MCF 10A (cell line): ENCODE measurements at regions of chr17 and their contacts with region 1.

Region 1: DNA sequence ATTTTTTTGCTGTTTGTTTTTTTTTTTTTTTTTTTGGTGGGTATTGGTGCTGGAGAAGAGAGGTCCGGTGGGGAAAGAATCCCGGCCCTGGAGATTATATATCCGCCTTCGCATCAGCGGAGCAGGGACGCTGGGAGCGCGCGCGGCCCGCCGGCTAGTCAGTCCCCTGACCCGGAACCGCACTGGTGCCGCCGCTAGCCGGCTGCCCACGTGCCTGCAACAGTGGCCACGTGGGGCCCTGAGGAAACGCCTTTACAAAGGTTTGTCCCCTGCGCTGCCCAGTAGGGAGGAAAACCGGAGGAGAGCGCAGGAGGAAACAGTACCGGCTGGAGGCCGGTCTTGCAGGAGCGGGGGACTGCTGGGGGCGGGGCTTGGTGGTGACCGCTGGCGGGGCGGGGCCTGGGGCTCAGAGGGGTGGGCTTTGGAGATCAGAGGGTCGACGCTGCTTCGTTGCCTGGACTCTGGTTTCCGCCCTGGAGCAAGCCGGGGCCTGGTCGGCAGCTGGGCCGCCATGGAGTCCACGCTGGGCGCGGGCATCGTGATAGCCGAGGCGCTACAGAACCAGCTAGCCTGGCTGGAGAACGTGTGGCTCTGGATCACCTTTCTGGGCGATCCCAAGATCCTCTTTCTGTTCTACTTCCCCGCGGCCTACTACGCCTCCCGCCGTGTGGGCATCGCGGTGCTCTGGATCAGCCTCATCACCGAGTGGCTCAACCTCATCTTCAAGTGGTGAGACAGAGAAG is at the start of gene G6PC3:
- DNase-seq: peak; percentile 98
- H3K4me3 Mint-ChIP-seq: peak within 1 kb of the TSS; percentile 92
- H3K27ac Mint-ChIP-seq: peak within 1 kb of the TSS; percentile 97
- H3K4me1 Mint-ChIP-seq: peaks cover 26% of the 10 kb centered on the region
- H3K27me3 Mint-ChIP-seq: no peaks in the 10 kb centered on the region
- CTCF ChIP-seq: no peak
- total RNA-seq, gene G6PC3: 70.6 and 89.4 TPM in 2 replicates

Region 2: DNA sequence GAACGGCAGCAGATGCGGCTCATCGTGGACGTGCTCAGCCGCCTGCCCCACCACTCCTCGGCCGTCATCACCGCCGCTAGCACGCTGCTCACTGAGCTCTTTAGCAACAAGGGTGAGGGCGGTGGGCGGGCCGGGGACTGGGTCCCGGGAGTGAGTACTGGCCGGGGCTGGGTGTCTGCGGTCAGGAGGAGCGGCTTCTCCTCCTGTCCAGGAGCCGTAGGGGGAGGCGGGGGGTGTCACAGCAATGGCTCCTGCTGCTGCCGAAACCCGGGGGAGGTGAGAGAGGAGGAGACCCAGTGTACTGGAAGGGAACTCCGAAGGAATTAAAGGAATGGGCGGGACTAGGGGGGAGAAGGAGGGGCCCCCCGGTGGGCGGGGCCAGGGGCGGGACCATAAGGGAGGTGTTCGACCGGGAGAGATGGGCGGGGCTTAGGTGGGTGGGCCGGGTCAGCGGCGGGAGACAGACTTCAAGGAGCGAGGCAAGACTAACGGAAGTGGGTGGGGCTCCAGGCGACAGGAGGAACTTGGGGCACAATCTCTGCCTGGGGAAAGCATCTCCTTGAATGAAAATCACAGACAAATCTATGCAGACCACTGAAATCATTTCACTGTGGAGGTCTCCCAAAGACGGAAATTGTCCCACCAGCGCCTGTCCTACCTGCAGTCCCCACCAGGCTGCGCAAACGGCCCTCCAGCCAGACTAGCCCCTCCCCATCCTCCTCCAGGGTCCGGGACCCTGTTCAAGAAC is 63.9 kb before region 1 on chr17:
- CTCF ChIA-PET with region 1: interaction called, 3 read pairs
- POLR2A ChIA-PET with region 1: interaction called, 5 read pairs
- intact Hi-C with region 1: loop called (anchors 2 kb)
- DNase-seq: peak; percentile 99
- H3K4me3 Mint-ChIP-seq: peak overlapping the region; percentile 85
- H3K27ac Mint-ChIP-seq: peak overlapping the region; percentile 91
- H3K4me1 Mint-ChIP-seq: peaks cover 11% of the 10 kb centered on the region
- H3K27me3 Mint-ChIP-seq: no peaks in the 10 kb centered on the region
- CTCF ChIP-seq: peak; percentile 67

Region 3: GRCh38 chr17:44014437-44015172 is 56.0 kb before region 1 on chr17 and contains the start of gene TMEM101:
- CTCF ChIA-PET with region 1: no interaction called
- POLR2A ChIA-PET with region 1: interaction called, 10 read pairs
- intact Hi-C with region 1: no loop called
- DNase-seq: peak; percentile 94
- H3K4me3 Mint-ChIP-seq: peak within 1 kb of the TSS; percentile 96
- H3K27ac Mint-ChIP-seq: peak within 1 kb of the TSS; percentile 98
- H3K4me1 Mint-ChIP-seq: no peaks in the 10 kb centered on the region
- H3K27me3 Mint-ChIP-seq: no peaks in the 10 kb centered on the region
- CTCF ChIP-seq: no peak
- total RNA-seq, gene TMEM101: 25.6 and 26.1 TPM in 2 replicates

Region 4: GRCh38 chr17:44086364-44087311 is 16.0 kb after region 1 on chr17:
- CTCF ChIA-PET with region 1: interaction called, 12 read pairs
- POLR2A ChIA-PET with region 1: interaction called, 12 read pairs
- intact Hi-C with region 1: no loop called
- DNase-seq: peak; percentile 90
- H3K4me3 Mint-ChIP-seq: peak overlapping the region; percentile 40
- H3K27ac Mint-ChIP-seq: peak overlapping the region; percentile 52
- H3K4me1 Mint-ChIP-seq: peaks cover 21% of the 10 kb centered on the region
- H3K27me3 Mint-ChIP-seq: no peaks in the 10 kb centered on the region
- CTCF ChIP-seq: no peak

Region 5: DNA sequence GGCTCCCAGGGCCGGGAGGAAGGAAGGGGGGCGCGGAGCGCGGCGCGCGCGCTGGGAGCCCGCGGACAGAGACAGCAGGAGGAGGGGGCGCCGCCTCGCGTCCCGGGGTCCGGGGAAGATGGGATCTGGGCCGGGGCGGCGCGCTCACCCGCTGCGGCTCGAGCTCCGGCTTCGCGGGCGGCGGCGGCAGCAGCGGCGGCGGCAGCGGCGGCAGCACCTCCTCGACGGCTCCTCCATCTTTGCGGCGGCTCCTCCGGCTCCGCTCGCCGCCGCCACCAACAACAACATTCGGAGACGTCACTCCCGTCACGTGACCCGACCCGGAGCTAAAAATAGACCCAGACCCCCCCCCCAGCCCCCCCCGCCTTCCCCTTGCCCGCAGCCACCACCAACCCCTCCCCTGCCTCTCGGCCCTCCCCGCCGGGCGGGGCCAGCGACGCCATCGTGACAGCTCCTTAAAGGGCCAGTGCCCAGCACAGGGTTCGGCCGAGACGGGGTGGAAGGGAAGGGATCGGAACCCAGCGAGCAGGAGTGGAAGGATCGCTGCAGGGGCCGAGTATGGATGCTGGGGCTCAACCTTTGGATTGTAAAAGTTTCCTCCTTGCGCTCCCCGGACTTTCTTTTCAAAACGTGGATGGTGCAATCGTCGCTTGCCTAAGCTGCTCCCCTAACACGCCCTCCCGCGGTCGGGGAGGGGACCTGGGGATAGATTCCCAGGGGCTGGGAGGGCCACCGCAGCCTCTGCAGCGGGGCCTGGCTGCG is 52.9 kb after region 1 on chr17 and contains the start of gene HDAC5:
- CTCF ChIA-PET with region 1: no interaction called
- POLR2A ChIA-PET with region 1: interaction called, 18 read pairs
- intact Hi-C with region 1: no loop called
- DNase-seq: peak; percentile 92
- H3K4me3 Mint-ChIP-seq: peak within 1 kb of the TSS; percentile 86
- H3K27ac Mint-ChIP-seq: peak within 1 kb of the TSS; percentile 98
- H3K4me1 Mint-ChIP-seq: peaks cover 6% of the 10 kb centered on the region
- H3K27me3 Mint-ChIP-seq: no peaks in the 10 kb centered on the region
- CTCF ChIP-seq: peak; percentile 57
- total RNA-seq, gene HDAC5: 12.1 TPM in 2 replicates

Region 6: GRCh38 chr17:44141717-44142285 is 71.2 kb after region 1 on chr17 and contains the start of gene HROB:
- CTCF ChIA-PET with region 1: interaction called, 3 read pairs
- POLR2A ChIA-PET with region 1: interaction called, 19 read pairs
- intact Hi-C with region 1: no loop called
- DNase-seq: peak; percentile 98
- H3K4me3 Mint-ChIP-seq: peak within 1 kb of the TSS; percentile 78
- H3K27ac Mint-ChIP-seq: peak within 1 kb of the TSS; percentile 93
- H3K4me1 Mint-ChIP-seq: peaks cover 26% of the 10 kb centered on the region
- H3K27me3 Mint-ChIP-seq: no peaks in the 10 kb centered on the region
- CTCF ChIP-seq: peak; percentile 84
- total RNA-seq, gene HROB: 5.4 and 6.7 TPM in 2 replicates

Region 7: GRCh38 chr17:44170499-44171201 is 100.0 kb after region 1 on chr17 and contains the start of gene ASB16:
- CTCF ChIA-PET with region 1: interaction called, 6 read pairs
- POLR2A ChIA-PET with region 1: interaction called, 20 read pairs
- intact Hi-C with region 1: no loop called
- DNase-seq: no peak
- H3K4me3 Mint-ChIP-seq: no peak within 1 kb of the TSS
- H3K27ac Mint-ChIP-seq: no peak within 1 kb of the TSS
- H3K4me1 Mint-ChIP-seq: peaks cover 11% of the 10 kb centered on the region
- H3K27me3 Mint-ChIP-seq: no peaks in the 10 kb centered on the region
- CTCF ChIP-seq: no peak
- total RNA-seq, gene ASB16: not detected in 2 replicates